Activated naive CD4-positive, alpha-beta T cell treated with anti-CD3 and anti-CD28 coated beads for 36 hours (primary cell): ENCODE measurements at regions of chr2 and their contacts with region 1.

Region 1: GRCh38 chr2:11234309-11234708 is 79.0 kb downstream of the SLC66A3 start:
- DNase-seq: no peak
- H3K4me3 Mint-ChIP-seq: no peak overlapping the region
- H3K27ac Mint-ChIP-seq: no peak overlapping the region
- H3K4me1 Mint-ChIP-seq: peaks cover 10% of the 10 kb centered on the region
- H3K27me3 Mint-ChIP-seq: no peaks in the 10 kb centered on the region

Region 2: GRCh38 chr2:11213090-11213638 is 21.1 kb before region 1 on chr2:
- CTCF ChIA-PET with region 1: no interaction called
- intact Hi-C with region 1: no loop called
- DNase-seq: no peak
- H3K4me3 Mint-ChIP-seq: no peak overlapping the region
- H3K27ac Mint-ChIP-seq: no peak overlapping the region
- H3K4me1 Mint-ChIP-seq: no peaks in the 10 kb centered on the region
- H3K27me3 Mint-ChIP-seq: no peaks in the 10 kb centered on the region

Region 3: DNA sequence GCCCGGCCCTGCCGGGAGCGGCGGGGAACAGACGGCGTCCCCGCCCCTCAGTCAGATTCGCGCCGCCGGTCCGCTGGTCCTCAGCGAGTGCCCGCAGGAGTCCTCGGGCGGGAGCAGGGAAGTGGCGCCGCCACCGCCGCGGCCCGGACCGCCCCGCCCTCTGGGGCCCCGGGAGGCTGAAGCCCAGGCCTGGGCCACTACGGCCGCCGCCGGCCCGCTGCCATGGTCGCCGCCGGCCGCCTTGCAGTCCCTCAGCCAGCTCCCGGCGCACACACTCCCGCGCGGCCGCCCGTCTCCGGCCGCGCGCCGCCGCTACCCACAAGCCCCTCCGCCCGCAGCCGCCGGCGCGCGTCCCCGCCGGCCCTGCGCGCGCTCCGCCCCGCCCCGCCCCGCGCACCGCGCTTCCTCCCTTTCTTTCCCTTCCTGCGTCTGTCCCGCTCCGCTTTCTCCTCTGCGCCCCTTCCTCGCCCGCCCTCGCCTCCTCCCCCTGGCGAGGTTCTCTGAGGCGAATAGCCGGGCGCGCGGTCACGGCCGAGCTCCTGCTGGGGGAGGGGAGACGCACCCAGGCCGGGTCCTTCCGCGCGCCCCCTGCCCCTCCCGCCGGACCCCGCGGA is 110.1 kb after region 1 on chr2 and contains the start of gene ROCK2:
- CTCF ChIA-PET with region 1: no interaction called
- intact Hi-C with region 1: loop called (anchors 2 kb)
- DNase-seq: peak; percentile 72
- H3K4me3 Mint-ChIP-seq: peak within 1 kb of the TSS; percentile 99
- H3K27ac Mint-ChIP-seq: peak within 1 kb of the TSS; percentile 85
- H3K4me1 Mint-ChIP-seq: peaks cover 29% of the 10 kb centered on the region
- H3K27me3 Mint-ChIP-seq: no peaks in the 10 kb centered on the region
- total RNA-seq, gene ROCK2: 8.4 to 9.4 TPM

Region 4: DNA sequence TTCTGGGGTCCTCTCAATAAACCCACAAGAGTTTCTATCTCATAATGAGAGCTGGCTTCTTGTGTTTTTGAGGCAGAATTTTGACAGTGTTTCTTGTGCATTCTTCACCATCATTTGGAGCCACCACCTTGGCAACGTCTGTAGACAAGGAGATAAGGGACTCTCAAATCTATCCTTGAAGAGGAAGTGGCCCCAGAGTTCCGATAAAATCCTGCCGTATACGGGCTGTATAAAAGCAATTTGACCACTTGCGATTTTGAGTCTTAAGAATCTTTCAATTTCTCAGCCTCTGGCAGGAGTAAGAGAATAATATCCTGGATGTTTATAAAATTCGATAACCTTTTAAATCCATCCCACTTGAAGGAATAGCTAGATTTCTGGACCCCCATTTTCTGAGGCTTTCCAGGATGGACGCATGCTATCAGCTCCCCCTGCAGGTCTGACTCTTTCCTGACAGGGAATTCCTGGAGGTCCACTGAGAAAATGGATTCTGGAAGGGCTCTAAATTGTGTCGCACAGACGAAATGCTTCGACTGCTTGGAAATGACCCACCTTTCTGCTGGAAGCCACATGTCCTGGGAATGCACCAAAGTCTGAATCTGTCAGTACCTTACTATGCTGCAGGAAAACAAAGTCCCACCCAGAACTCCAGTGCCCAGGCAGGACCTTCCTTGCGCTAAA is 177.6 kb after region 1 on chr2:
- CTCF ChIA-PET with region 1: no interaction called
- intact Hi-C with region 1: loop called (anchors 10 kb)
- DNase-seq: peak; percentile 30
- H3K4me3 Mint-ChIP-seq: no peak overlapping the region
- H3K27ac Mint-ChIP-seq: no peak overlapping the region
- H3K4me1 Mint-ChIP-seq: no peaks in the 10 kb centered on the region
- H3K27me3 Mint-ChIP-seq: peaks cover 10% of the 10 kb centered on the region

Region 5: DNA sequence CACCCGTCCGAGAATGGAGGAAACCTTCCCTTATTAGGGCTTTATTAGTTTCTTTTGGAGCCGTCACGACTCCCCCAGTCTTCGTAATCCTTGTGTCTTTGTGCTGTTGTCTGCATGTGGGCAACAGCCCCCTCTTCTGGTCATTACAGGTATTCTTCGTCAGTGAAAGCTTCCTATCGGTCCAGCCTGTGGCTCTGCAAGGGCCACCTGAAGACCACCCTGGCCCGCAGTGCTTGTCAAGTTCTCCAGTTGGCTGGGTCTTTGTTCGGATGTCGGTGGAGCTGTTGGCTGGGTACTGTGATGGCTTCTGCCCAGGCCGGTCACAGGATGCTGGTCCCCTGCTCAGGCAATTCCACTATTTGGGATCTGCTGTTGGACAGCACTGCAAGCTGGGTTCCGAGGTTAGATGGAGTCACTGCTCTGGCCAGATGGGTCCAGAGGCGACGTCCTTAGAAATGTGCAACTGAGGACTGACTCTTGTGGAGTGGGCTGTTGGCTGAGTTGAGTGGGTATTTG is 212.5 kb after region 1 on chr2:
- CTCF ChIA-PET with region 1: no interaction called
- intact Hi-C with region 1: loop called (anchors 1 kb)
- DNase-seq: peak; percentile 60
- H3K4me3 Mint-ChIP-seq: no peak overlapping the region
- H3K27ac Mint-ChIP-seq: no peak overlapping the region
- H3K4me1 Mint-ChIP-seq: no peaks in the 10 kb centered on the region
- H3K27me3 Mint-ChIP-seq: no peaks in the 10 kb centered on the region